Activated CD4-positive, alpha-beta memory T cell treated with anti-CD3 and anti-CD28 coated beads for 36 hours (primary cell): ENCODE measurements at regions of chr11 and their contacts with region 1.

Region 1: GRCh38 chr11:118689851-118690552 is 10.6 kb upstream of the TREH start:
- DNase-seq: peak; percentile 94
- H3K4me3 Mint-ChIP-seq: peak overlapping the region; percentile 79
- H3K27ac Mint-ChIP-seq: peak overlapping the region; percentile 70
- H3K4me1 Mint-ChIP-seq: peaks cover 39% of the 10 kb centered on the region
- H3K27me3 Mint-ChIP-seq: peaks cover 2% of the 10 kb centered on the region

Region 2: GRCh38 chr11:118659314-118659952 is 30.6 kb before region 1 on chr11:
- CTCF ChIA-PET with region 1: interaction called, 14 read pairs
- POLR2A ChIA-PET with region 1: no interaction called
- intact Hi-C with region 1: no loop called
- DNase-seq: peak; percentile 94
- H3K4me3 Mint-ChIP-seq: no peak overlapping the region
- H3K27ac Mint-ChIP-seq: no peak overlapping the region
- H3K4me1 Mint-ChIP-seq: peaks cover 2% of the 10 kb centered on the region
- H3K27me3 Mint-ChIP-seq: no peaks in the 10 kb centered on the region

Region 3: DNA sequence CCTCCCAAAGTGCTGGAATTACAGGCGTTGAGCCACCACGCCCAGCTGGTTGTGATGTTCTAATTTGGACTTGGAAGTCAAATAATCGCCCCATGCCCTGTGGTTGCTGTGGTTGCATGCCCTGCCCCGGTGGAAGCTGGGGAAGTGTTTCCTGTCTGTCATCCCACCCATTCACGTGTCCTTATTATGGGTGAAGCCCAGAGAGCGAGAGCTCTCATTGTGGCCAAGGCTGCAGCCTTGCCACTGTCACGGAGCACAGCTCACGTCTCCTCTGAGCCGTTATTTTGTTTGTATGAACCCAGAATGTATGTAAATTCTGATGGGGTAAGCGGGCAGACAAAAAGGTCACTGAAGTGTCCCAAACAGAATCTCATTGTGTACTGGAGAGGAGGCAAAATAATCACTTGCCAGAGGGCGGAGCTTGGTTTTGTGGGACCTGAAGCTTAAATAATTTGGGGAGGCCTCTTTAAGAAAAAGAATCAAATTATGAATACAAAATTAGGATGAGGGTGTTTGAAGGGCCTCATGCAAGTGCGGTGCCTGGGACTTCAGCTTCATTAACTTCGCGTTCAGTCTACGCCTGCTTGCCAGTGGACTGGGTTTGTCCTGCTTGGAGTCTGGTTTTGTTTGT is 15.2 kb after region 1 on chr11:
- CTCF ChIA-PET with region 1: interaction called, 22 read pairs
- POLR2A ChIA-PET with region 1: no interaction called
- intact Hi-C with region 1: no loop called
- DNase-seq: peak; percentile 66
- H3K4me3 Mint-ChIP-seq: peak overlapping the region; percentile 15
- H3K27ac Mint-ChIP-seq: peak overlapping the region; percentile 49
- H3K4me1 Mint-ChIP-seq: peaks cover 25% of the 10 kb centered on the region
- H3K27me3 Mint-ChIP-seq: no peaks in the 10 kb centered on the region

Region 4: GRCh38 chr11:118791111-118791965 is 101.3 kb after region 1 on chr11 and contains the start of gene DDX6:
- CTCF ChIA-PET with region 1: interaction called, 19 read pairs
- POLR2A ChIA-PET with region 1: interaction called, 4 read pairs
- intact Hi-C with region 1: loop called (anchors 1 kb)
- DNase-seq: peak; percentile 94
- H3K4me3 Mint-ChIP-seq: peak within 1 kb of the TSS; percentile 94
- H3K27ac Mint-ChIP-seq: peak within 1 kb of the TSS; percentile 99
- H3K4me1 Mint-ChIP-seq: peaks cover 22% of the 10 kb centered on the region
- H3K27me3 Mint-ChIP-seq: no peaks in the 10 kb centered on the region
- total RNA-seq, gene DDX6: 175 to 180 TPM

Region 5: DNA sequence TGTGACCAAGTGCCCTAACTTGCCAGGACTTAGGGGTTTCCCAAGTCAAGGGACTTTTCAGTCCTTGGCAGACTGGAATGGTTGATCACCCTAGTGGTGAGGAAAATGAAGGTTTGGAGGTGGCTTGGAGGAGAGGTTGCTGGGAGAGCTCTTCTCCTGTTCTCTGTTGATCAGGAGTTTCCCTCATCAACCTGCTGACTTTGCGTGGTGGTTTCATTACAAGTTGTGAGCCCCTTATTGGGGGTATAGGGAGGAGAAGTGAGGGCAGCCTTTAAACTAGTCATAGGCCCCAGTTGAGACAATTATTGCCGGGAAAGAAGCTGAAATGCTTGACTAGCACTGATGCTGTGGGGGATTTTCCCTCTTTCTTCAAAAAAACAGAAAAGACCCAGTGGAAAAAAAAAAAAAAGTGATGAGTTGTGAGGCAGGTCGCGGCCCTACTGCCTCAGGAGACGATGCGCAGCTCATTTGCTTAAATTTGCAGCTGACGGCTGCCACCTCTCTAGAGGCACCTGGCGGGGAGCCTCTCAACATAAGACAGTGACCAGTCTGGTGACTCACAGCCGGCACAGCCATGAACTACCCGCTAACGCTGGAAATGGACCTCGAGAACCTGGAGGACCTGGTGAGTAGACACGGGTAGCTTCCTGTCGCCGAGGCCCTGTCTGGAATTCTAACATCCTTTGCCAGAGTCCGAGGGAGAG is 193.5 kb after region 1 on chr11 and contains the start of gene CXCR5:
- CTCF ChIA-PET with region 1: interaction called, 20 read pairs
- POLR2A ChIA-PET with region 1: interaction called, 3 read pairs
- intact Hi-C with region 1: loop called (anchors 5 kb)
- DNase-seq: peak; percentile 84
- H3K4me3 Mint-ChIP-seq: peak within 1 kb of the TSS; percentile 85
- H3K27ac Mint-ChIP-seq: peak within 1 kb of the TSS; percentile 99
- H3K4me1 Mint-ChIP-seq: peaks cover 81% of the 10 kb centered on the region
- H3K27me3 Mint-ChIP-seq: no peaks in the 10 kb centered on the region
- total RNA-seq, gene CXCR5: 28.0 to 28.3 TPM

Region 6: DNA sequence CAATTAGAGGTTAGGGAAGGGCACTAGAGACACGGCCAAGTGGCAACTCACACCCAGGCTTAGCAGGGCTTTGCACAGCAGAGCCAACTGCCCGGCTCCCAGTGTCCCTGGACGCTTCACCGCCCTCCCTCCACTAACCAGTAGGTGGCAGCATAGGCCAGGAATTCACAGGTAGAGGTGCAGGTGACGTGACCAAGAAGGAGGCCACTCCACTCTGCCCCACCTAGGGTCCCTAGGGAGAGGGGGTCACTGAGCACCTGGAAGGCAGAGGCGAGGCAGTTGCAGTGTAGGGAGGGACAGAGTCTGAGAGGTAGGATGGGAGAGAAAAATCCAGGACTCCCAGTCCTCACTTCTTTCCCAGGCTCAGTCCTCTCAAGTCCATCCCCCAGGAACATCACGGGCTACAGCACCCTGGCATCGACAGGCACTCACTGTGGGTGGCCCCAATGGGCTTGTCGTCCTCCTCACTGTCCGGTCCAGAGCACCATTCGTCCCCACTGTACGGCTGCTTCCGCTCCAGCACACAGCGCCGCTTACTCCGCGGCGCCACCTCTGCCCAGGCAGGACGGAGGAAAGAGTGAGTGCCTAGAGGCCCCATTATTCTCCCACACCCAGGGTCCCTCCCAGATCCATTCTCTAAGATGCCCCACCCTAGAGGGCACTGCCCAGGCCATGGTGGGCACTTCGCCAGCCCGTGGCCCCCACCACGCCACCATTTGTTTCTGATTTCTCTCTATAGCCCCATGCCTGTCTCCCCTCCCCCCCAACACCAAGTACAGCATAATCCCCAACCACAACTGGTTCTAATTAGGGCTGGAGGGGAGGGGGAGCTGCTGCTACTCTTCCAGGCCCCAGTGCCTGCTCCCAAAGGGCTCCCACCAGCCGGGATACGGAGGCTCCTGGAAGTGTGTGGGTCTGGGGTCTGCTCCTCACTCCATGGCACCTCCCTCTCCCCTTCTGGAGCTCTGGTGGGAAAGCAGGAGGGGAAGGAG is 217.3 kb after region 1 on chr11:
- CTCF ChIA-PET with region 1: interaction called, 7 read pairs
- POLR2A ChIA-PET with region 1: no interaction called
- intact Hi-C with region 1: loop called (anchors 2 kb)
- DNase-seq: peak; percentile 93
- H3K4me3 Mint-ChIP-seq: no peak overlapping the region
- H3K27ac Mint-ChIP-seq: peak overlapping the region; percentile 65
- H3K4me1 Mint-ChIP-seq: peaks cover 44% of the 10 kb centered on the region
- H3K27me3 Mint-ChIP-seq: no peaks in the 10 kb centered on the region

Region 7: DNA sequence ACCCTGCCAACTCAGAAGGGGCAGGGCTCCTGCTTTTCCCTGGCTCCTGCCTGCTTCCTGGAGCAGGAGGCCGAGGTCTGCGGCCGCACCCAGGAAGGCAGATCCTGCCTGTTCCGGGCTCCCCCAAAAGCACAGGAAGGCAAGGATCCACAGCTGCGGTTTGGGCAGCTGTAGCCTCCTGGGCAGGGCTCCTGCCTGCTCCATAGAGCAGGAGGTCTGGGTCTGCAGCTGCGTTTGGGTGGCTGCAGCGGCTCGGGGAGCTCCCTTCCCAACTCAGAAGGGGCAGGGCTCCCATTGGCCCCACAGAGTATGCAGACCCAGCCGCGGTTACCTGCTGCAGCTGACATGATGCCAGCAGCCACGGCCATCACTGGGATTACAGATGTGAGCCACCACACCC is 271.6 kb after region 1 on chr11:
- CTCF ChIA-PET with region 1: interaction called, 12 read pairs
- POLR2A ChIA-PET with region 1: no interaction called
- intact Hi-C with region 1: loop called (anchors 1 kb)
- DNase-seq: no peak
- H3K4me3 Mint-ChIP-seq: no peak overlapping the region
- H3K27ac Mint-ChIP-seq: no peak overlapping the region
- H3K4me1 Mint-ChIP-seq: no peaks in the 10 kb centered on the region
- H3K27me3 Mint-ChIP-seq: no peaks in the 10 kb centered on the region